Calu3 (cell line): ENCODE measurements at regions of chr14 and their contacts with region 1.

Region 1: DNA sequence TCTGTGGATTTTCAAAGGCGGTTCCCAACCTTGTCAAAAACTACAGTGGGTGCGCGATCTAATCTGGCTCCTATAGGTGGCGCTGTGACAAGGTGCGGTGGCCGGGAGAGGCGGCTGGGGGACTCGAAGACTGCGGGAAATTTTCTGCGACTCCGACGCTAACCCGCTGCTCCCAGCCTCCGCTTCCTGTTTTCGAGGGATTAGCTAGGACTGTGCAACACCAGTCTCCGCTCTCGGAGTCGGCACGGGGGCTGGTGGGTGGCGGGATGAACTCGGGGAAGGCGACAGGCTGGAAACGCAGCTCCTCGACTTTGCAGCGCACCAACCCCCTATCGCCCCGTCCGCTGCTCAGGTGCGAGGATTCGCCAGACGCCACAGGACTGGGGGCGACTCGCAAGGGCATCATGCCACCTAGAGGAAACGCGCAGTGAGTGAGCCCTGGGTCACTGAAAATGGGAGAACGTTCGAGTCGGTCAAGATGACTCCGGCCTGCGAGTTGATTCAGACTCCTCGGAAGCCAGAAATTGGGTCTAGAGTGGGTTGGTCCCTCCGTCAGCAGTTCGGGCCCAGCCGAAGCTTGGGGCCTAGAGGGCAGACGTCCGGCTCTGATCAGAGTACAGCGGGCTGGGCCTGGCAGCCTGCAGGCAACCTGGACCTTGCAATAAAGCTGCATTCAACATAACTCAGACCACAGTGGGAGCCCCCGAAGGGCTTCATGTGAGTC is 5.5 kb upstream of the PAX9 start:
- DNase-seq: peak; percentile 86
- H3K4me3 Mint-ChIP-seq: peak overlapping the region; percentile 66
- H3K27ac Mint-ChIP-seq: peak overlapping the region; percentile 28
- H3K4me1 Mint-ChIP-seq: peaks cover 13% of the 10 kb centered on the region
- H3K27me3 Mint-ChIP-seq: peaks cover 58% of the 10 kb centered on the region
- CTCF ChIP-seq: peak; percentile 42

Region 2: DNA sequence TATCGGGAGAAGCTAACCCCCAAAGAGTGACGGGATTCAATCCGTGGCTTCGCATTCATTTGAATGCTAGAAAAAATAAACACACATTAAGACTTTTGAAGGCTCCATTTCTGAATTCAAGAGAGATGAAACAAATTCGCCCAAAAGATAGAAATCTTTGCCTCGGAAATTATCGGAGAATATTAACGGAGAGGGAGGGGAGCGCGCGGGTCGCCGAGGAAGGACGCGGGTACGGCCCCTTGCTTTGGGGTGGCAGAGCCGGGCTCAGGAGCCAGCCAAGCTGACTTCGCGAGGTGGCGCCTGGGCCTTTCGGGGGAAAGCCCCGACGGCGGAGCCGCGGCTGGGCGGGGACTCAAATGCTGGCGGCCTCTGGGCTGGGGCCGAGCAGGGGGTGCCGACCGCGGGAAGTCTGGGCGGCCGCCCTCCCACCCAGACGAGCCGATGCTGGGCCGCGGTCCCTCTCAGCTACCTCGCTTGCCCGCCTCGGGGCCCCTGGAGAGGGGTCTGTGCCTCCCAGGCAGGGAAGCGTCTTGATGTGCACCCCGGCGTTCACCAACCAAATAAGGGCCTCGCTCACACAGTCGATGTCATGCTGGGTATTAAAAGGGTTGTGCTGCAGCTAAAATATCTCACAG is 150.8 kb before region 1 on chr14:
- CTCF ChIA-PET with region 1: no interaction called
- intact Hi-C with region 1: no loop called
- DNase-seq: no peak
- H3K4me3 Mint-ChIP-seq: no peak overlapping the region
- H3K27ac Mint-ChIP-seq: no peak overlapping the region
- H3K4me1 Mint-ChIP-seq: no peaks in the 10 kb centered on the region
- H3K27me3 Mint-ChIP-seq: peaks cover 93% of the 10 kb centered on the region
- CTCF ChIP-seq: no peak

Region 3: GRCh38 chr14:36773136-36773540 is 117.0 kb after region 1 on chr14:
- CTCF ChIA-PET with region 1: no interaction called
- intact Hi-C with region 1: loop called (anchors 5 kb)
- DNase-seq: peak; percentile 10
- H3K4me3 Mint-ChIP-seq: no peak overlapping the region
- H3K27ac Mint-ChIP-seq: no peak overlapping the region
- H3K4me1 Mint-ChIP-seq: peaks cover 6% of the 10 kb centered on the region
- H3K27me3 Mint-ChIP-seq: no peaks in the 10 kb centered on the region
- CTCF ChIP-seq: no peak